ENCODE measurements at regions of chr10 and their contacts with region 1.

Region 1: DNA sequence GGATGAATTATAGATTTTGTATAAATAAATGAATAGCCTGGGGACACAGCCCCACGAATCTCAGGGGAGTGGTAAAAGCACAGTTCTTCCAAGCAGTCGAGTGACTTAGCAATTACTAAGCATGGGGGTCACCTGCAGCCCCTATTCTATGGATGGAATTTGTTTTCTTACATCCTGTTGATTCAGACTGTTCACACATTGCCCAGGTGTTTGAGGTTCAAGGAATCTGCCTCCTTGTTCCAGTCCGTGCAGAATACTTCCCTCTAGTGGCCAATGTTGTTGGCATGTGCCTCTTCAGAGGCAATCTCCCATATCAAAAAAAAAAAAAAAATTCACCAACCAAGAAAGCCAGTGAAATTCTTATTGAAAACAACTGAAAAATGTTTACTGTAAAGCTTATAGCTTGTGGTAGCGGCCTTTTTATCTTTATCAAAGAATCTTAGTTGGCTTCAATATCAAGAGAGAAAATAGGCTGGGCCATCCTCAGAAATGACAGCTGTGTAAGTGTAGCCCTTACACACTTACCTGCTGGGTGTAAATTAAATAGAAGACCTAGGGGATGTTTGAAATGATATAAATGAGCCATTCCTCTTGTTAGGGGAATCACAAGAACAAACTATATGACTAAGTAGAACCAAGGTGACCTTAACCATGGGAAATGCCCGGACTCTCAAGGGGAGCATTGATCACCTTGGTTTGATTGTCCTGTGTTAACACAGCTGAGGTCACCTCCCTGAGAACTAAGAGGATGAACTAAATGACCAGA is 7.8 kb downstream of the LIPM start:
- DNase-seq: peak in 3 of 5 donors; percentile 24 to 73 (median 66)
- H3K4me3 ChIP-seq: no peak overlapping the region
- H3K27ac ChIP-seq: no peak overlapping the region
- H3K4me1 ChIP-seq: no peaks in the 10 kb centered on the region
- H3K27me3 ChIP-seq: no peaks in the 10 kb centered on the region
- CTCF ChIP-seq: peak; percentile 61

Region 2: GRCh38 chr10:88565072-88565471 is 245.3 kb before region 1 on chr10:
- intact Hi-C with region 1: loop called (anchors 5 kb)
- DNase-seq: peak in 2 of 5 donors; percentile 25 to 33
- H3K4me3 ChIP-seq: no peak overlapping the region
- H3K27ac ChIP-seq: no peak overlapping the region
- H3K4me1 ChIP-seq: no peaks in the 10 kb centered on the region
- H3K27me3 ChIP-seq: no peaks in the 10 kb centered on the region
- CTCF ChIP-seq: peak; percentile 24